ENCODE measurements at regions of chr20 and their contacts with region 1.

Region 1: DNA sequence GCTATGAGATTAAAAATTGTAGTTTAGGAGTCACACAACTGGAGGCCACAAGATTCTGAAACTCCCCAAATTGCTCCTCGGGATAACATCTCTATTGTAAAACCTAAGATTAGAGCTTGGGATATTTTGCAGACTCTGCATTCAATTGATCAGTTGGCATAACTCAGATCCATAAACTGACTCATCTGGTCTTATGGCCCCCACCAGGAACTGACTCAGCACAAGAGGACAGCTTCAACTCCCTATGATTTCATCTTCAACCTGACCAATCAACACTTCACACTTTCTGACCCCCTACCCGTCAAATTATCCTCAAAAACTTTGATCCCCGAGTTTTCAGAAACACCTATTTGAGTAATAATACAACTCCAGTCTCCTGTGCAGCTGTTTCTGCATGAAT is 257.3 kb downstream of the HAO1 start:
- DNase-seq: no peak
- ATAC-seq: no peak
- H3K4me3 ChIP-seq: no peak overlapping the region
- H3K27ac ChIP-seq: no peak overlapping the region
- H3K4me1 ChIP-seq: no peaks in the 10 kb centered on the region
- H3K27me3 ChIP-seq: no peaks in the 10 kb centered on the region
- CTCF ChIP-seq: no peak
- POLR2A ChIP-seq: no peak

Region 2: DNA sequence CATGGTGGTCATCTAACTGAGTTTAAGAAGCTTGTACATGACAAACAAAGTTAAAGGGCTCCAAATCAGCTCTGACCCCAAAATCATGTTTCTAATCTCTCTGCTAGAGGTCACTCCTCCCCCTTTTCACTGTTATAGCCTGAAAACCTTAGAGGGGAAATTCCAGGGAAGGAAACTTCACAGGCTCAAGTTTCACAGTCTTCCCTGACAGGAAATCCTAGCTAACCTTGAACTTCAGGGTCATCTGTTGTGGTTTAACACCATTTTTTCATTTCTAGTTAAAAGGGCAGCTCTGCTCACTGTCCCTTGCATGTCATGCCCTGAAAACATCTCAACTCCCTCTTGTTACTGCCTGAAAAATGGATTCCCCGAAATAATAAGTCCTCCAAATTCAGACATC is 1019.8 kb before region 1 on chr20:
- in situ Hi-C with region 1: no loop called
- intact Hi-C with region 1: loop called (anchors 5 kb)
- DNase-seq: no peak
- ATAC-seq: no peak
- H3K4me3 ChIP-seq: no peak overlapping the region
- H3K27ac ChIP-seq: no peak overlapping the region
- H3K4me1 ChIP-seq: no peaks in the 10 kb centered on the region
- H3K27me3 ChIP-seq: no peaks in the 10 kb centered on the region
- CTCF ChIP-seq: no peak
- POLR2A ChIP-seq: no peak